Activated CD4-positive, alpha-beta T cell treated with anti-CD3 and anti-CD28 coated beads for 36 hours (primary cell): ENCODE measurements at regions of chr20 and their contacts with region 1.

Region 1: GRCh38 chr20:50992733-50993457 is 30.0 kb downstream of the KCNG1 start:
- DNase-seq: peak; percentile 78
- ATAC-seq: peak; percentile 100
- H3K4me3 Mint-ChIP-seq: no peak overlapping the region
- H3K27ac Mint-ChIP-seq: no peak overlapping the region
- H3K4me1 Mint-ChIP-seq: no peaks in the 10 kb centered on the region
- H3K27me3 Mint-ChIP-seq: peaks cover 4% of the 10 kb centered on the region

Region 2: DNA sequence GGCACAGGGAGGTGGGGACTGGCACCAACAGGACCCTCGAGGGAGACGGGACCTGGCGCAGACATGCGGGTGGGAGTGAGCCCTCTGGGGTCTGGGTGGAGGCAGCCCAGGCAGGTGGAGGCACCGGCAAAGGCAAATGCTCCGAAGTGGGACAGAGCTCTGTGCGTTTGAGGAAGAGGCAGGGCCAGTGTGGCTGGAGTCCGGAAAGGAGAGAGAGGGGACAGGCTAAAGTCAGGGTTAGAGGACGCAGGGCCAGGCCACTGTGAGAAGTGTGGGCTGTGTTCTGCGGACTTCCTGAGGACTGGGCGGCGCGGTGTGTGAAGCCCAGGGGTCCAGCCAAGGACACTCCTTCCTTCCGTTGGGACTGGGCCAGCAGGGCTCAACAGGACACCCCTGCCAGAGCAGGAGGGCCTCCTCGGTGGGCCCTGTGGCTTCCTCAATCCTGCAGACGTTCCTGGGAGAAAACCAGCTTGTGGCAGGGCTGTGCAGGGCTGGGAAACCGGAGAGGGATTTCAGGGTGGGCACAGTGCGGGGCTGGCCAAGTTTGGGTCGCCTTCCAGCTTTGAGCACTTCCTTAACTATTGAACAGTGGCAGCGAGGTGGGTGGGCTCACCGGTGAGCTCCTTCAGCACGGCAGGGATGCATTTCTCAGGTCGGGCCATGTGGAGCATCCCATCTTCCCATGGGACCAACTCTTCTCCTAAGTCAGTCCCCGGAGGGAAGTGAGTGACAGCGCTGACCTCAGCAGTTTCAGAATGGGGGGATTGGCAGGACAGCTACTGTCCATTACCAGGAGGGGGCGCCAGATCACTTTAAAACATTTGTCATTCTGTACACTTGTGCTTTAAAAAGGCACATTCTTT is 11.8 kb before region 1 on chr20:
- CTCF ChIA-PET with region 1: interaction called, 34 read pairs
- POLR2A ChIA-PET with region 1: no interaction called
- intact Hi-C with region 1: no loop called
- DNase-seq: peak; percentile 84
- ATAC-seq: no peak
- H3K4me3 Mint-ChIP-seq: no peak overlapping the region
- H3K27ac Mint-ChIP-seq: peak overlapping the region; percentile 90
- H3K4me1 Mint-ChIP-seq: peaks cover 20% of the 10 kb centered on the region
- H3K27me3 Mint-ChIP-seq: peaks cover 26% of the 10 kb centered on the region

Region 3: GRCh38 chr20:51022803-51023630 is 30.1 kb after region 1 on chr20 and contains the start of gene KCNG1:
- CTCF ChIA-PET with region 1: interaction called, 4 read pairs
- POLR2A ChIA-PET with region 1: no interaction called
- intact Hi-C with region 1: loop called in 1 of 2 experiments (anchors 2 kb)
- DNase-seq: peak; percentile 83
- ATAC-seq: peak; percentile 94
- H3K4me3 Mint-ChIP-seq: peak within 1 kb of the TSS; percentile 61
- H3K27ac Mint-ChIP-seq: no peak within 1 kb of the TSS
- H3K4me1 Mint-ChIP-seq: peaks cover 11% of the 10 kb centered on the region
- H3K27me3 Mint-ChIP-seq: peaks cover 50% of the 10 kb centered on the region
- total RNA-seq, gene KCNG1: 2.5 to 2.8 TPM

Region 4: GRCh38 chr20:51220293-51220706 is 227.4 kb after region 1 on chr20:
- CTCF ChIA-PET with region 1: interaction called, 6 read pairs
- POLR2A ChIA-PET with region 1: no interaction called
- intact Hi-C with region 1: loop called in 1 of 2 experiments (anchors 5 kb)
- DNase-seq: peak; percentile 83
- ATAC-seq: peak; percentile 87
- H3K4me3 Mint-ChIP-seq: no peak overlapping the region
- H3K27ac Mint-ChIP-seq: no peak overlapping the region
- H3K4me1 Mint-ChIP-seq: peaks cover 10% of the 10 kb centered on the region
- H3K27me3 Mint-ChIP-seq: peaks cover 58% of the 10 kb centered on the region

Region 5: GRCh38 chr20:51318058-51318895 is 325.4 kb after region 1 on chr20:
- CTCF ChIA-PET with region 1: interaction called, 126 read pairs
- POLR2A ChIA-PET with region 1: no interaction called
- intact Hi-C with region 1: loop called in 1 of 2 experiments (anchors 1 kb)
- DNase-seq: peak; percentile 83
- ATAC-seq: peak; percentile 82
- H3K4me3 Mint-ChIP-seq: no peak overlapping the region
- H3K27ac Mint-ChIP-seq: peak overlapping the region; percentile 66
- H3K4me1 Mint-ChIP-seq: no peaks in the 10 kb centered on the region
- H3K27me3 Mint-ChIP-seq: no peaks in the 10 kb centered on the region

Region 6: DNA sequence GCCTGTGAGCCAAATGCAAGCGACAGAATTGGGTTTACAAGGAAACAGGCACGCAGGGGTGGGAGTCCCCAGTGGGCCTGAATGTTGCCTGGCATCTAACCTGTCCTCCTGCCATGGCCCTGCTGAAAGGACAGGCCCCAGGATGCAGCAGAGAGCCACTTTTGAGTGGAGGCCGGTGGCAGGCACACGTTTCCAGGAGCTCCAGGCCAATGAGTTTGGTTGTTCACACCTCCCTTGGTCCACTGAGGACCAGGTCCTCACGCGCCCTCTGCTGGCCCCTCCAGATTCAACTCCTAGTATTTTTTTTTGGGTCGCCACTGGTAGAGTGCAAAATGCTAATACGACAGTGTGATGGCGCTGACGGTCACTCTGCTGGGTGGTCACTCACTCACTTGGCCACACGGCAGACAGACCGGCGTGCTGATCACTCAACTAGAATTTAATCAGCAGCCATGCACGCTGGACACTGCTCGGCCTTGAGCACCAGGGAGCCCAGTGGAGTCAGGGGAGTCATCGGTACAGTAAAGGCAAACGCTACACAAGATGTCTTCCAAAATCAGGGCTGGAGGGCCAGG is 631.3 kb after region 1 on chr20:
- CTCF ChIA-PET with region 1: interaction called, 6 read pairs
- POLR2A ChIA-PET with region 1: no interaction called
- intact Hi-C with region 1: loop called in 1 of 2 experiments (anchors 2 kb)
- DNase-seq: peak; percentile 85
- ATAC-seq: peak; percentile 57
- H3K4me3 Mint-ChIP-seq: no peak overlapping the region
- H3K27ac Mint-ChIP-seq: no peak overlapping the region
- H3K4me1 Mint-ChIP-seq: peaks cover 19% of the 10 kb centered on the region
- H3K27me3 Mint-ChIP-seq: peaks cover 3% of the 10 kb centered on the region